Testis (tissue), 5 donors: ENCODE measurements at regions of chr17 and their contacts with region 1.

Region 1: DNA sequence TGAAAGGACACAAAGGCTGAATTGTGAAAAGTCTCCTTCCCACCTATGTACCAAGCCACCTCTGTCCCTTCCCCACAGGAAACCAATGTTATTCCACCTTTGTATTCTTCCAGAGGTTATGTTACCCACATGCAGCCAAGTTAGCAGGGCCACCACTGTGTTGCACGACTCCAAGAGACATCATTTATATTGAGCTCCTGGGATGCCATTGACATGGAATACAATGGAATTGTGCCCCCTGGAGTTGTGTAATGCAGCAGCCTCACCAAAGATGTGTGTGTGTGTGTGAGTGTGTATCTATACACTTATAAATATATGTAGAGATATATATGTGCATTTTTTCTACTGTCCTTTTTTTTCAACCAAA is 21.6 kb upstream of the MSI2 start:
- DNase-seq: no peak
- H3K4me3 ChIP-seq: no peak overlapping the region
- H3K27ac ChIP-seq: no peak overlapping the region
- H3K4me1 ChIP-seq: no peaks in the 10 kb centered on the region
- H3K27me3 ChIP-seq: no peaks in the 10 kb centered on the region
- CTCF ChIP-seq: no peak
- POLR2A ChIP-seq: no peak

Region 2: GRCh38 chr17:57328093-57328882 is 93.6 kb after region 1 on chr17:
- intact Hi-C with region 1: no loop called
- DNase-seq: no peak
- H3K4me3 ChIP-seq: no peak overlapping the region
- H3K27ac ChIP-seq: no peak overlapping the region
- H3K4me1 ChIP-seq: peaks cover 3% of the 10 kb centered on the region
- H3K27me3 ChIP-seq: no peaks in the 10 kb centered on the region
- CTCF ChIP-seq: no peak
- POLR2A ChIP-seq: no peak

Region 3: GRCh38 chr17:57432520-57433277 is 198.0 kb after region 1 on chr17:
- intact Hi-C with region 1: loop called (anchors 5 kb)
- DNase-seq: no peak
- H3K4me3 ChIP-seq: no peak overlapping the region
- H3K27ac ChIP-seq: no peak overlapping the region
- H3K4me1 ChIP-seq: peaks cover 6% of the 10 kb centered on the region
- H3K27me3 ChIP-seq: no peaks in the 10 kb centered on the region
- CTCF ChIP-seq: no peak
- POLR2A ChIP-seq: no peak